Lower leg skin (tissue), 4 donors: ENCODE measurements at regions of chr12 and their contacts with region 1.

Region 1: GRCh38 chr12:11855983-11856374 is 206.5 kb downstream of the ETV6 start:
- DNase-seq: no peak
- H3K4me3 ChIP-seq: no peak overlapping the region
- CTCF ChIP-seq: no peak
- POLR2A ChIP-seq: no peak

Region 2: DNA sequence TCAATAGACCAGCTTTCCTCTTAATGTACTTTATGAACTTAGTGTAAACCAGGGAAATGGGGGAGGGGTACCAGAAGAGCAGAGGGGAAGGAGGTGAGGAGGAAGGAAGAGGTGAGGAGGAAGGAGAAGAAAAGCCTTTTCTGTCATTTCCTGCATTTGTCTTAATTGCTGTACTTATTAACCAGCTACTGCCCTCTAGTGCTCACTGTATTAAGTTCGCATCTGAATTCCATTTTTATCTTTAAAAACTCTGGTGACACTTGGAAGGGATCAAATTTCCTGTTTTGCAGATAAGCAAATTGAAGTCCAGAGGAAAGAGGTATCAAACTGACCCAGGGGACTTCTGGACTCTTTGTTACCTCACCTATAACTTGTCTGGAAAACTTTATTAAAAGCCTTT is 471.8 kb after region 1 on chr12:
- intact Hi-C with region 1: loop called (anchors 10 kb)
- DNase-seq: no peak
- H3K4me3 ChIP-seq: no peak overlapping the region
- CTCF ChIP-seq: peak in 1 of 3 donors; percentile 33
- POLR2A ChIP-seq: no peak